Ovary (tissue), 10 donors: ENCODE measurements at regions of chr5 and their contacts with region 1.

Region 1: DNA sequence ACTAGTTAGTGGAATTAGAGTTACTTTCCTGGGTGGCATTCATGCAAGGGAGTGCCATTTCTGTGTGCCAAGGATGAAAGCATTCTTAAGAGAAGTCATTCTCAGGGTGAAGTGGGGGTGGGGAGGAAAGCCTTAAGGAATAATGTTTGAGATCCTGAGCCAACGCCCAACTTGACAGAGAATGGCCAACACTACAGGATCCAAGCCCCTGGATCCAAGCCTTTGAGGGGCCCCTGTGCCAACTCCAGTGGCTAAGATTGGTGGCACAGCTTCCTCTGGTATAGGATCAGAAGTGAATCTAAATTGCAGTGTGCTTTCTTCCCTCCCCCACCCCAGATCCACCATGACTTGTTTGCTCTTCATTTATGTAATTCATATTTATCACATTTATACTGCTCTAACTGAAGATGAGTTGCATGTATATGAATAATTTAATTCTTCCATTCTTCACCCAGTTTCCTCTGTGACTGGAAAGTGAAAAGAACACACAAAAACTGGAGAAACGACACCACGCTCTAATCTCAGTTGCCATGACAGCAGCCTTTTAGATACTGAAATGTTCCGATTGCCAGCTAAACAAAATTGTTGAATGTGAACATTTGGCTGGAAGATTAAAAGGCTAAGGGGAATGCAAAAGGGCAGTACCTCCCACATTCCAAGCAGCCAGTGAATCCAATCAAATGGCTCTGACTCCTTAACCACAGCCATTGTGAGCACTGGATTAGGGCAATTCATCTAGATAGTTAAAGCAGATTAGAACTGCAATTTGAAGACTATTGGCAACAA is 4.5 kb downstream of the ZNF608 start:
- DNase-seq: peak in 1 of 5 donors; percentile 21
- H3K4me3 ChIP-seq: no peak overlapping the region
- H3K27ac ChIP-seq: no peak overlapping the region
- H3K4me1 ChIP-seq: peaks cover 10% of the 10 kb centered on the region
- H3K27me3 ChIP-seq: no peaks in the 10 kb centered on the region
- CTCF ChIP-seq: no peak
- EP300 ChIP-seq: no peak
- POLR2A ChIP-seq: no peak

Region 2: GRCh38 chr5:124655922-124656511 is 85.9 kb before region 1 on chr5:
- intact Hi-C with region 1: loop called in 2 of 4 experiments (anchors 5 to 10 kb)
- DNase-seq: no peak
- H3K4me3 ChIP-seq: no peak overlapping the region
- H3K27ac ChIP-seq: peak overlapping the region in 1 of 2 donors; percentile 47
- H3K4me1 ChIP-seq: peaks cover 10% of the 10 kb centered on the region
- H3K27me3 ChIP-seq: no peaks in the 10 kb centered on the region
- CTCF ChIP-seq: no peak
- EP300 ChIP-seq: no peak
- POLR2A ChIP-seq: no peak